Mammary epithelial cell (primary cell): ENCODE measurements at regions of chr11 and their contacts with region 1.

Region 1: GRCh38 chr11:119144825-119145486 is 3.9 kb upstream of the ABCG4 start:
- DNase-seq: peak; percentile 42
- H3K4me3 ChIP-seq: no peak overlapping the region
- H3K27ac ChIP-seq: no peak overlapping the region
- H3K4me1 ChIP-seq: peaks cover 10% of the 10 kb centered on the region
- H3K27me3 ChIP-seq: no peaks in the 10 kb centered on the region
- CTCF ChIP-seq: peak; percentile 51 to 67

Region 2: GRCh38 chr11:119196833-119197483 is 52.0 kb after region 1 on chr11:
- CTCF ChIA-PET with region 1: interaction called, 3 read pairs
- dilution Hi-C with region 1: no loop called
- in situ Hi-C with region 1: no loop called
- intact Hi-C with region 1: loop called (anchors 1 kb)
- DNase-seq: peak; percentile 80
- H3K4me3 ChIP-seq: no peak overlapping the region
- H3K27ac ChIP-seq: no peak overlapping the region
- H3K4me1 ChIP-seq: no peaks in the 10 kb centered on the region
- H3K27me3 ChIP-seq: no peaks in the 10 kb centered on the region
- CTCF ChIP-seq: peak; percentile 72 to 74

Region 3: DNA sequence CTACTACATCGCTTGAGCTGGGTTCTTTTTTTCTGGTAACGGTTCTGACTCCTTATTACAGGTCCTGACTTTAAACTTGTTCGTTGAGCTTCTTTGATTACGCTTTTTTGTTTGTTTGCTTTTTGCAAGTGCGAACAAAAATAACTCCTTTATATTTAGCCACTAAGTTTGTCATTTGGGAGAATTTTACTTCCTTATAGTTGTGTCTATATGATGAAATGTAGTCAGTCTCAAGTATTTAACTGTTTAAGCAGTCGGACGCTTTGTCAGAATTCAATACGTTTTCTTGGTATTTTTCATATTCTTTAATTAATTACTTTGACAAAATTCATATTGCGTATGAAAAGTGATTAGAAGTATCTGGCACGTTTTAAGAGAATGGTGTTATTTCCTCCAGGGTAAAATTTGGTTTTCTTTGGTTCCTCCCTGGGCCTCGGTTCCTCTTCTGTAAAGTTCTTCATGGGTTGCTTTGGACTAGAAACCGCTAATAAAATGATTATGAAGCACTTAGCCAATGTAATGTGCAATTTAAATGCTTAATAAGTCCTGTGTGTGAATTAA is 62.5 kb after region 1 on chr11:
- CTCF ChIA-PET with region 1: no interaction called
- dilution Hi-C with region 1: no loop called
- in situ Hi-C with region 1: no loop called
- intact Hi-C with region 1: no loop called
- DNase-seq: no peak
- H3K4me3 ChIP-seq: peak overlapping the region; percentile 76 to 97 (median 96)
- H3K27ac ChIP-seq: peak overlapping the region; percentile 11
- H3K4me1 ChIP-seq: peaks cover 11% of the 10 kb centered on the region
- H3K27me3 ChIP-seq: no peaks in the 10 kb centered on the region
- CTCF ChIP-seq: no peak

Region 4: GRCh38 chr11:119284344-119285157 is 139.6 kb after region 1 on chr11:
- CTCF ChIA-PET with region 1: no interaction called
- dilution Hi-C with region 1: no loop called
- in situ Hi-C with region 1: no loop called
- intact Hi-C with region 1: loop called (anchors 10 kb)
- DNase-seq: peak; percentile 35
- H3K4me3 ChIP-seq: no peak overlapping the region
- H3K27ac ChIP-seq: no peak overlapping the region
- H3K4me1 ChIP-seq: no peaks in the 10 kb centered on the region
- H3K27me3 ChIP-seq: no peaks in the 10 kb centered on the region
- CTCF ChIP-seq: peak in 1 of 2 donors; percentile 59

Region 5: GRCh38 chr11:119323538-119324033 is 178.6 kb after region 1 on chr11:
- CTCF ChIA-PET with region 1: no interaction called
- dilution Hi-C with region 1: no loop called
- in situ Hi-C with region 1: no loop called
- intact Hi-C with region 1: loop called (anchors 5 kb)
- DNase-seq: peak; percentile 52
- H3K4me3 ChIP-seq: no peak overlapping the region
- H3K27ac ChIP-seq: no peak overlapping the region
- H3K4me1 ChIP-seq: peaks cover 29% of the 10 kb centered on the region
- H3K27me3 ChIP-seq: no peaks in the 10 kb centered on the region
- CTCF ChIP-seq: peak; percentile 78 to 85